RWPE1 (cell line): ENCODE measurements at regions of chr6 and their contacts with region 1.

Region 1: DNA sequence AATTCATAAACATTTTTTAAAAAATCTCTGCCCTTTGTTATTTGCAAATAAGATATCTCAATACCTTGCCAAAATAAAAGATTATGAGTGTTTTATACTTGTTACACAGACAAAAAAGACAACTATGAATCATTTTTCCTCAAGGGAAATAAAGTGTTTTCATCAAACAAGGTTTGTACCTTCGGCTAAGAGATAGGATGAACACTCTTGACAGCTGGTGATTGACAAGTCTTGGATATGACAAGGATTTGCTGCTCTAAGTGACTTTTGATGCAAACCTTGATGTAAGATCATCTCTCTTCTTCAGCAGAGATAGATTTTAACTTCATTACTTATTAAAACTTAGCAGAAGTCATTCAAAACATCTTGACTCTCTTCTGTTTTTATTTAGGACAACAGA is 514.3 kb upstream of the IRAK1BP1 start:
- DNase-seq: no peak
- H3K27ac ChIP-seq: no peak overlapping the region
- CTCF ChIP-seq: no peak

Region 2: DNA sequence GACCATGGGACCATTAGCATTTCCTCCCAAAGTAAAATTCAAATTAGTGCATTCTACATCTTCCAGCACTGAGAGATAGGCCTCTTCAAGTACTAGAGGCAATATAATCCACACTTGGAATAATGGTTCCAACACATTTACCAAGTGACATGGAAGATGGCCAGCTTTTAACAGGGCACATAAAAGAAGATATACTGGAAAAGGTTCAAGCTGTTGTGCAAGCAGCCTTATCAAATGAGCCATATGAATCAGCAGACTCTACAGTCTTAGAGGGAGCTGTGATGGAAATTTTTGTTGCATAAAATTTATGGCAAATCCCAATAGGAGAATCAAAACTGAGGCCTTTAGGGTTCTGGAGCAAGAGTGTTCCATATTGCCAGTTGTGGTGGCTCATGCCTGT is 12.3 kb before region 1 on chr6:
- CTCF ChIA-PET with region 1: no interaction called
- POLR2A ChIA-PET with region 1: no interaction called
- DNase-seq: no peak
- H3K27ac ChIP-seq: no peak overlapping the region
- CTCF ChIP-seq: no peak

Region 3: DNA sequence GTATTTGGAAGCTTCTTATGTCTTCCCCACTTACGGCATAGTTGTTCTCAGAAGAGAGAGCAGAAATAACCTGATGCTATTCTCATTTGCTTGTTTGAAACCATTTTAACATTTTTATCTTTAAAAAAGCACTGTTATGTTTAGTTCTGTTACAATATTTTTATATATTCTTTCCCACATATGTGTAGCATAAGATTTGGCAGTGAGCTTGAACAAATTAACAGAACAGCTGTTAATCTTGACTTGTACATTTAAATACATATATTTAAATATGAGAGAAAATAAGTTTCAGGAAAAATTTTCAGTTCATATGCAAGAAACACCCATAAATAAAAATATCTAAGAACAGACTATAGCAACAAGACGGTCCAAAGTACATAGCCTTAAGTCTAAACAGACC is 82.6 kb after region 1 on chr6:
- CTCF ChIA-PET with region 1: interaction called, 11 read pairs
- POLR2A ChIA-PET with region 1: no interaction called
- DNase-seq: no peak
- H3K27ac ChIP-seq: no peak overlapping the region
- CTCF ChIP-seq: no peak